Heart left ventricle (tissue), 16 donors: ENCODE measurements at regions of chr2 and their contacts with region 1.

Region 1: GRCh38 chr2:162318328-162319180 is at the start of gene IFIH1:
- DNase-seq: peak; percentile 79 to 86 (median 84)
- ATAC-seq: peak; percentile 93 to 98 (median 97)
- H3K4me3 ChIP-seq: peak within 1 kb of the TSS; percentile 59 to 95 (median 82)
- H3K27ac ChIP-seq: peak within 1 kb of the TSS; percentile 82 to 98 (median 86)
- H3K4me1 ChIP-seq: peaks cover 0 to 68% (median 8%) of the 10 kb centered on the region in 12 donors
- H3K27me3 ChIP-seq: no peaks in the 10 kb centered on the region
- CTCF ChIP-seq: peak in 8 of 12 donors; percentile 9 to 58 (median 40)
- POLR2A ChIP-seq: peak in 1 of 2 donors; percentile 47
- total RNA-seq, gene IFIH1: 4.5 to 24.2 (median 6.8) TPM

Region 2: GRCh38 chr2:162282765-162283425 is 35.7 kb before region 1 on chr2:
- intact Hi-C with region 1: no loop called
- DNase-seq: no peak
- ATAC-seq: peak; percentile 13 to 67 (median 40)
- H3K4me3 ChIP-seq: no peak overlapping the region
- H3K27ac ChIP-seq: peak overlapping the region in 1 of 12 donors; percentile 14
- H3K4me1 ChIP-seq: no peaks in the 10 kb centered on the region
- H3K27me3 ChIP-seq: no peaks in the 10 kb centered on the region
- CTCF ChIP-seq: no peak
- POLR2A ChIP-seq: no peak

Region 3: DNA sequence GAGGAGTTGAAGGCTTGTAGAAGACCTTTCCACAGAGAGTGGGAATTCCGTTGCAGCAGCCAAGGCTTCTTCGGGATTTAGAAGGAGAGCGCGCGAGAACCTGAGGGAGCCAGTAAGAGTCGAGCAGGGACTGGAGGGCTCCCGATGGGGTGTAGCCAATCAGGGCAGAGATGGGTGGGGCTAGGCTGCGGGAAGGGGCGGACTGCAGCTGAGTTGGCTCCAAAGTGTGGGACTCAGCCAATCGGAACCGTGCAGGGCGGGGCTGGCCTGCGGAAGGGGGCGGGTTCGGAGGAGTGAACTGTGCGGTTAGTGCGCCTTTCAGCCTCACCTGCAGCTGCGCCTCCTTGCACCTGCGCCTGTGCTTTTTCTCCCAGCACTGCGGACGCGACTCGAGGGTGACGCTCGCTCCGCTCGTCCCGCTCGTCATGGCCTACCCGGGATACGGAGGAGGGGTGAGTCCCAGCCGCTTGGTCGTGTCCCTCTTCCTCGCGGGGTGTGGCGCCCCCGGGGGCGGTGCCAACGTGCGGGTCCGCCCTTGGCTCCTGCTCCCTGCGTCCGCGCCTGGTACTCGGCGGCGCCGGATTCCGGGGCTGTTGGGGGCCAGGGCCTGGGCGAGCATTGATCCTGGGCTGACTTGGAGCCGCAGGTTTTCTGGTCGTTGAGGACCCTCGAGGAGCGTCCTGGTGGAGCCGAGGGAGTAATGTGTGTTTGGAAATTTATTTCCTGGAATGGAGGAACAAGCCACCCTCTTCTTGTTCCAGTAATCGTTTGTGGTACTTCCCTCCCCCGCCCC is 25.5 kb after region 1 on chr2 and contains the start of gene GCA:
- intact Hi-C with region 1: loop called in 2 of 10 experiments (anchors 2 kb)
- DNase-seq: peak; percentile 97 to 98 (median 98)
- ATAC-seq: peak; percentile 100
- H3K4me3 ChIP-seq: peak within 1 kb of the TSS; percentile 57 to 87 (median 78)
- H3K27ac ChIP-seq: peak within 1 kb of the TSS in 10 of 12 donors; percentile 31 to 89 (median 66)
- H3K4me1 ChIP-seq: peaks cover 0 to 18% (median 4%) of the 10 kb centered on the region in 12 donors
- H3K27me3 ChIP-seq: no peaks in the 10 kb centered on the region
- CTCF ChIP-seq: peak in 4 of 12 donors; percentile 11 to 31 (median 23)
- POLR2A ChIP-seq: peak in 1 of 2 donors; percentile 60
- total RNA-seq, gene GCA: 5.8 to 20.3 (median 6.4) TPM